ENCODE measurements at regions of chr18 and their contacts with region 1.

Region 1: DNA sequence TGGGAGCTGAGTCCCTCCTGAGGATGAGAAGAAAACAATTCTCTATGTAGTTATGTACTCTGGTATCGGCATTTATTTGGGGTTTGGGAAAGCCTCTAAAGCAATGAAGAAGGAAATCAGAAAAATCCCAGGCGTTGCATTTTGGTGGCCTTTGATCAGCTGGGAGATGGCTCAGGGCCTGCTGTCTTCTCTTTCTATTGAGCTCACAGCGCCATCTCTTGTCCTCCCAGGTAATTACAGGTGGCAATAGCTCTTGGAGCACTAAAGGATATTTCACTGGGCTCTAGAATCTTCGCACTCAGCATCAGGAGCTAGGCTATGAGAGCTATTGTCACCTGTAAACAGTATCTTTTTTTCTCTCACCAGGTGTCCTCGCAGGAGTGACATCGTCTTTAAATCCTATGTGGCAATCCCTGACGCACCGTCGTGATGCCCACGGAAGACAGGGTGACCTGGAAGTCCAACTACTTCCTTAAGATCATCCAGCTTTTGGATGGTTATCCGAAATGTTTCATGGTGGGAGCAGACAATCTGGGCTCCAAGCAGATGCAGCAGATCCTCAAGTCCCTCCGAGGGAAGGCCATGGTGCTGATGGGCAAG is 76.1 kb upstream of the PMAIP1 start:
- DNase-seq: no peak
- ATAC-seq: peak; percentile 87

Region 2: GRCh38 chr18:59308248-59308937 is 515.3 kb before region 1 on chr18:
- intact Hi-C with region 1: loop called (anchors 5 kb)
- DNase-seq: peak; percentile 82
- ATAC-seq: peak; percentile 97

Region 3: GRCh38 chr18:59459369-59460079 is 364.2 kb before region 1 on chr18:
- intact Hi-C with region 1: loop called (anchors 2 kb)
- DNase-seq: no peak
- ATAC-seq: peak; percentile 45

Region 4: DNA sequence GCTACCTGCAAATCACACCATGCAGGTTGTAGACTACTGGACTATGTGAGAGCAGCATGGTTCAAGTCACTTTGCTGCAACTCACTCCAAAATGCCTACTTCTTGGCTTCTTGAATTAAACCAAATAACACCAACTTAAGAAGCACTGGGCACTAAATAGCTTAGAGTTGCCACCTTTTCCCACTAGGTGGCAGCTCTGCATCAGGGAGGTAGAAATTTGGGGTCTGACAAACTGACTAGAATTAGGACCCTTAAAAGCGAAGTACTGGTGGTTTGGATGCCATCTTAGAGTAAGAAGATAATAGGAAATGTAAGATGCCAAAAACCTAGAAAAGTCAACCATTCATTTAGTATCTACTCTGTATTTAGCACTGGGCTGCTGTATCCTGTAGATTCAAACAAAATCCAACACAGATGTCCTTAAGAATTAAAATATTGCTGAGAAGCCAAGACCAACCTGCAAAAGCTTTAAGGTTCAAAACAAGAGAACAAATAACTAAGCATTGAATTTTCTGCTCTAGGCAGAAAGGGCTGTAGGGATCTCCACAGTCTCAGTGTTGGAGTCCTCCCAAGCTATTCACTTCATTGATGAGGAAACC is 192.0 kb before region 1 on chr18:
- intact Hi-C with region 1: loop called (anchors 5 kb)
- DNase-seq: no peak
- ATAC-seq: no peak

Region 5: DNA sequence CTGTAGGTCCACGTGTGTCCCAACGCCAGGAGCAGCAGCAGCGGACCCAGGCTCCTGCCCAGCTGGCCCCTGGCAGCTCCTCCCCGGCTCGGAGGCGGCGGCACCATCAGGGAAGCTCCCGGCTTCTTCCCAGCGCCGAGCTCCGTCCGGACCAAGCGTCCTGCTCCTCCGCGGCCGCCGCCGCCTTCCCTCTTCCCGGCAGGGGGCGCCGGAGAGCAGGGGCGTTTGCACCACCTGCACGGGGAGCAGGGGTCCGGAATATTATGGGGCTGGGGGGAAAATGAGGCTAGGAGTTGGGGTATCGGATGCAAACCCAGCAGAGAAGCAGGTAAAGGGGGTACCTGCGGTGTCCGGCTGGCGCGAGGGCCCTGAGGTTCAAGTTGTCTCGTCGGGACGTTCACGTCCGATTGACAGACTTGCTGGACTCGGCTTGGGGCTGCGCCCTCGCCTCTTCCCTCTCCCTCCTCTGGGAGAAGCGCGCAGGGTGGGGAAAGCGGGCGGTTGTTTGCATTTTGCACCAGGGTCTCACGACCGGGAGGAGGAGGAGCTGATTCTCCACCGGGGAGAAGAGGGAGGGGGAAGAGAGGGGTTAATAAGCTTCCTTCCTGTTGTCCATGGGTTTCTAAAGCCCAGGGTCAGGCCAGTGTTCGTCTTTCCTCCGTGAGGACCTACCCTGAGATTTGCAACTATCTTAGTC is 126.3 kb before region 1 on chr18 and contains the start of gene CCBE1:
- intact Hi-C with region 1: loop called (anchors 5 kb)
- DNase-seq: peak; percentile 77
- ATAC-seq: peak; percentile 87
- total RNA-seq, gene CCBE1: 3.6 TPM

Region 6: GRCh38 chr18:59763541-59764136 is 60.1 kb before region 1 on chr18:
- intact Hi-C with region 1: no loop called
- DNase-seq: no peak
- ATAC-seq: no peak

Region 7: DNA sequence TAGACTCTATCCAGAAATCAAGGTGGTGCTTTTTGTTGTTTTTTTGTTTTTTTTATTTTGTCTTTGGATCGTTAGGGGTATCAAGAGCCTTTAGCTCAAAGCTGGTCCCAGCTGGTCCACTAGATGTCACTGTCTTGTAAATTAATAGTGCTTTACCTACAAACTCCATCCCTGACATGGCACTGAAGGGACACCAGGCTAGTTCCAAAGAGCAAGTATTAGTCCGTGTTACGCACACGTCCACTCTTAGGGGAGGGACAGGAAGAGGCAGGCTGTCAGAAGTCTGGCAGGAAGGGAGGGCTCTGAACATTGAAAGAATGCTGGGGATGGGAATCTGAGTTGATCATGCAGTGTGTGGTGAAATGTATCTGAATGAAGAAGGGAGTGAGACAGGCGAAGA is 40.6 kb before region 1 on chr18:
- intact Hi-C with region 1: loop called (anchors 5 kb)
- DNase-seq: no peak
- ATAC-seq: no peak